HEK293T (cell line): ENCODE measurements at regions of chr10 and their contacts with region 1.

Region 1: DNA sequence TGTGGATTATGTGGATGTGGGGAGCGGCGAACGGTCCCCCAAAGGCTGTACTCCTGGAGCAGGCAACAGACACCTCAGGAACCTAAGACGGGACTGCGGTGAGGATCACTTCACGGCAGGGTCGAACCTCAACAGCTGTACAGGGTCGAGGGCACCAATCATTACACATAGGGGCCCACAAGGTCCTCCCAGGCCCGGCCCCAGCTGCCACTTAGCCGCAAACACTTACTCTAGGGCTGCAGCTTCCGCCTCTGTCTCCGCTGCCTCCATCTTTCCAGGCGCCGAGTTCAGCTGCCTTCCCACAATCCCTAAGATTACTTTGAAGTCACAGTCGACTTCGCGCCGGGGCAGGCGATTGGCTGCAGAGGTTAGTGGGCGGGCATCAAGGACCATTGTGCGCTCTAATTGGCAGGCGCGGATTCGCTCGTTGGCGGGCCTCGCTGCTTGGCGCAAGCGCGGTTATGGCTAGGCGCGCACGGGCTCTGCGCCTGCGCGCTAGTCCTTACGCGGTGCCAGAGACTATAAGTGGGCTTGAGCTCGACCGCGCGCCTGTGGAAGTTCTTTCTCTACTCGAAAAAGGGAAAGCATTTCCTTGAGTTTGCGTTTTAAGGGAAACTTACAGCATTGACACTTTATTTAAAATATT is at the start of gene ZWINT:
- DNase-seq: peak; percentile 94

Region 2: DNA sequence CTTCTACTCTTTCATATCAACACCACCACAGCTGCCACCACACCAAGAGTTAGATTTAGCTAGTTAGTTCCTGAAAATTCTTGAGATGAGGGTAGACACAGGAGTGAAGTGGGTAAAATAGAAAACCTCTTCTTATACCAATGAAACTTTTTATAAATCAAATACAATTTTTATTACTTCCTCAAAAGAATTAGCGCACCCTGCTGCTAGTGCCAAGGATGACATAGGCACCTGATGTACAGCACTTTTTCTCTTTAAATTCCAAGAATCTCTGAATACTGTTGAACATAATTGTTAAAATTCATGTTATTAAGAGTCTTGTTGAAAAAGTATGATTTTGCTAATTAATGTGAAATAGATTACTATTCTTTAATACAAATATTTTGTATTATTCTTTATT is 11.5 kb before region 1 on chr10:
- CTCF ChIA-PET with region 1: no interaction called
- POLR2A ChIA-PET with region 1: interaction called, 14 read pairs
- DNase-seq: no peak